GM13976 (cell line): ENCODE measurements at regions of chr2 and their contacts with region 1.

Region 1: DNA sequence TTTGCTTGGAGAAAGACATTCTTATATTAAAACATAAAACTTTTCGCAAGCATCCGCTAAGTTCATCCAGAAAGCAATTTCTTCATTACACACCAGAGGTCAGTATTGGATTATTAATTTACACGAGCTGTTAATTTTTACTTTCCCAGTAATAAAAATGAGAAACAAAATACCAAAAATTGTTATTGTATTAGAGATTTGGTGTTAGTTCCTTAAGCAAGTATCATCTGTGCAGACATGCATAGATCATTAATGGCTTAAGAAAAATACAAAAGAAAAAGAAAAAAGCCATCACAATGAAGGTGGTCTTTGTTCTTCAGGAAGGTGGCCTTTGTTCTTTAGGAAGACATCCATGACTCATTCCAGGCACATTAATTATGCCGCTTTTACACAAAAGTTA is 53.6 kb upstream of the HNMT start:
- DNase-seq: peak; percentile 6
- CTCF ChIP-seq: peak; percentile 23

Region 2: GRCh38 chr2:138814120-138814898 is 903.7 kb after region 1 on chr2:
- in situ Hi-C with region 1: loop called (anchors 10 kb)
- DNase-seq: no peak
- CTCF ChIP-seq: no peak